Activated CD8-positive, alpha-beta T cell treated with anti-CD3 and anti-CD28 coated beads, Interleukin-2, amount 10 ng/mL, durations not matched to agents 7 days and 5 days (primary cell): ENCODE measurements at regions of chr6 and their contacts with region 1.

Region 1: DNA sequence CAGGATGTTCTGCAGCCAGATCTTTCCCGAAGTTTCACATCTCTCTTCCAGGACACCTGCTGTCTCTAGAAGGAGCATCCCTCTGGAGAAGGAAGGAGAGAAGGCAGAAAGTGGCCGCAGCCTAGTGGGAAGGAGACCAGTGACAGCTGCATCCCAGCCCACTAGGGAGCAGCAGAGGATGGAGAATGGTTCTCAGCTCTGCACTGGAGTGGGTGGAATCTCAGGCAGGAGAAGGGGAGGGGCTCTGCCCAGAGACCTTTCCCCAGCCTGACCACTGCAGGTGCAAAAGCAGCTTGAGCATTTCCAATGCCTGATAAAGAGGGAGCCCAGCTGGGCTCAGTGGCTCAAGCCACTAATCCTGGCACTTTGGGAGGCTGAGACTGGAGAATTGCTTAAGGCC is 32.3 kb downstream of the NCR2 start:
- DNase-seq: peak; percentile 22
- ATAC-seq: no peak
- H3K4me3 Mint-ChIP-seq: no peak overlapping the region
- H3K27ac Mint-ChIP-seq: no peak overlapping the region
- H3K4me1 Mint-ChIP-seq: peaks cover 26% of the 10 kb centered on the region
- H3K27me3 Mint-ChIP-seq: peaks cover 54% of the 10 kb centered on the region

Region 2: DNA sequence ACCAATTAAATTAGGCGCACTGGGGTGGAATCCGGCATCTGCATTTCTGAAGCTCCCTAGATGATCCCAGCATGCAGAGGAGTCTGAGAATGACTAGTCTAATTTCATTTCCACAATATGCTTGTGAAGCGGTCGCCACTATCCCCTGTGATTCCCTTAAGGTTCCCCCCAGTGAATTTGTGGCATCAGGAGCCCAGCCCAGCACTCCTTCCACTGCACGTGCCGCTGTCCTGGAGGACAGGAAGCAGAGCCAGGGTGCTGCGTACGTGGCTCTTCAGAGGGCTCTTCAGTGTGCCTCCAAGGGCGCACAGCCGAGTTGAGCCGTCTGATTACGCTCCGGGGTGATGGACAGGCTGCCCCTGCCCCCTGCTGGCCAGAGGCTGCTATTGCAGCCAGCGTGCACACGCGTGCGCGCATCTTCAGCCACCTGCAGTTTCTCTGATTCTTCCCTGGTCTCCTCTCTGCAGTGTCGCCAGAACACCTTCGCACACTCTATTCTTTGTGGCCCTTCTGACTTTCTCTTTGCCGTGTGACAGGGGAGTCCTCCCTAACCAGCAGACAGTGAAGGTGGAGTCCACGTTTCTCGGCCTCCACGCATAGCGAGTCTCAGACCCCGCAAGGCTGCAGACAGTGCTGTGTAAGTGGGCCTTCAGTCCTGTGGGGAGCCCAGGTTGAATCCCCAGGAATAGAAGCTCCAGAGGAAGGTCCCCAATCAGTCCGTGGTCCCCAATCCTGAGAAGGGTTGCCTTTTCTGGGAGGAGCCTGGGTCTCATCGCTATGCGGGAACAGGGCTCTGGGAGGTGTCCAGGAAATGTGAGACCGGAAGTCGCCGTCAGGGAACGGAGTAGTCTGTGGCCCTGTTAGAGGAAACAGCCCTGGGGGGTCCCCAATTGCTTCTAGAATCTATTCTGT is 48.8 kb before region 1 on chr6:
- CTCF ChIA-PET with region 1: interaction called, 58 read pairs
- POLR2A ChIA-PET with region 1: no interaction called
- DNase-seq: peak; percentile 90
- ATAC-seq: peak; percentile 98
- H3K4me3 Mint-ChIP-seq: peak overlapping the region; percentile 38
- H3K27ac Mint-ChIP-seq: peak overlapping the region; percentile 71
- H3K4me1 Mint-ChIP-seq: peaks cover 26% of the 10 kb centered on the region
- H3K27me3 Mint-ChIP-seq: peaks cover 27% of the 10 kb centered on the region

Region 3: DNA sequence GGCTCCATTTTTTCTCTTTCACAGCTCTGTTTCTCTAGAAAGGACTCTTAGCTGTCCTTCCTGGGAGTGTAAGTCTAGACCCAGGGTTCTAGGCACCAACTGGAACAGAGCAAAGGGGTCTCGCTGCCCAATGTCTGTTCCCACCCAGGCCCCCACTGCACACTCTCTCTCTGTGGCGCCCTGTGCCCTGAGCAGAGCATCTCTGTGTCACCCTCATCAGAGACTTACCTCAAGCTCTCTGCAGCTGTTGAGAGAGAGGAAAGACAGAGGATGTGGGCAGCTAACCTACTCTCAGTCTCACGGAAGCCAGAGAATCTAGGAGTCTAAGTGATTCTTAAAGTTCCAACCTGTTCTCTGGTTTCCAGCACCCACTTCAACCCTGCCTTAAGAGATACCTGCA is 22.8 kb before region 1 on chr6:
- CTCF ChIA-PET with region 1: interaction called, 64 read pairs
- POLR2A ChIA-PET with region 1: no interaction called
- DNase-seq: peak; percentile 79
- ATAC-seq: peak; percentile 99
- H3K4me3 Mint-ChIP-seq: peak overlapping the region; percentile 55
- H3K27ac Mint-ChIP-seq: peak overlapping the region; percentile 91
- H3K4me1 Mint-ChIP-seq: peaks cover 87% of the 10 kb centered on the region
- H3K27me3 Mint-ChIP-seq: no peaks in the 10 kb centered on the region

Region 4: GRCh38 chr6:41527721-41528590 is 160.3 kb after region 1 on chr6:
- CTCF ChIA-PET with region 1: no interaction called
- POLR2A ChIA-PET with region 1: no interaction called
- DNase-seq: no peak
- ATAC-seq: no peak
- H3K4me3 Mint-ChIP-seq: no peak overlapping the region
- H3K27ac Mint-ChIP-seq: no peak overlapping the region
- H3K4me1 Mint-ChIP-seq: peaks cover 20% of the 10 kb centered on the region
- H3K27me3 Mint-ChIP-seq: peaks cover 53% of the 10 kb centered on the region

Region 5: GRCh38 chr6:41591859-41592502 is 224.3 kb after region 1 on chr6:
- CTCF ChIA-PET with region 1: interaction called, 16 read pairs
- POLR2A ChIA-PET with region 1: no interaction called
- DNase-seq: peak; percentile 85
- ATAC-seq: peak; percentile 77
- H3K4me3 Mint-ChIP-seq: no peak overlapping the region
- H3K27ac Mint-ChIP-seq: no peak overlapping the region
- H3K4me1 Mint-ChIP-seq: no peaks in the 10 kb centered on the region
- H3K27me3 Mint-ChIP-seq: no peaks in the 10 kb centered on the region

Region 6: DNA sequence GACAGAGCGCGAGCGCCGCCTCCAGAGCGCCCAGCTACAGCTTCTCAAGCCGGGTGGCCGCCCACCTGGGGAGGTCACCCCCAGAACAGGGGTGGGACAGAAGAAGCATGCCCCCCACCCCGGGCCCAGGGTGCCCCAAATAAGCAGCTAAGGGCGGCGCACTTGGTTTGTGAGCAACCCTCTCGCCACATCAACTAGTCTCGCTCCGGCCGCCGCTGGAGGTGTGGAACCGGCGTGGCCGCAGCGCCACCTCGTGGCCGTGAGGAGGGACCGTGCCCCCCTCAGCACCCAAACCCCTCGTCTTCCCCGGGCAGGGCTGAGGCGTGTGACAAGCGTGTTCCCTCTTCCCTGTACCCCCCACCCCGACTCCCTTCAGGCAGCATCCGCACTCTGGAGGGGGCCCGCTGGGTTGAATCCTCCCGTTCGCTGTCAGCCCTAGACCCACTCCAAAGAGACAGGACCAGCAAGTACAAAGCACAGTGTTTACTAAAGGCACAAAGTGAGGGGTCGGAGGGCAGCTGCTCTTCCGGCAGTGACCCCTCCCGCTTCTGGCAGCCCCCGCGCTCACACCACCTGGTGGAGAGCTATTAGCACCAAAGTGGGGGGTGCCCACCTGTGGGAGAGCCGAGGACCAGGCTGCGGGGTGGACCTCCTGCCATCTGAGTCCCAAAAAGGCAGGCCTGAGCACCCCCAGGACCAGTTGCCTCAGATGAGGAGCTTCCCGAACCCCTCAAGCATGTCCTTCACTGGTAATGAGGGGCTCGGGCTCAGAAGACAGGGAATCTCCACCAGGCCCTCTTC is 316.0 kb after region 1 on chr6:
- CTCF ChIA-PET with region 1: interaction called, 17 read pairs
- POLR2A ChIA-PET with region 1: no interaction called
- DNase-seq: peak; percentile 84
- ATAC-seq: peak; percentile 94
- H3K4me3 Mint-ChIP-seq: peak overlapping the region; percentile 68
- H3K27ac Mint-ChIP-seq: peak overlapping the region; percentile 63
- H3K4me1 Mint-ChIP-seq: peaks cover 17% of the 10 kb centered on the region
- H3K27me3 Mint-ChIP-seq: peaks cover 2% of the 10 kb centered on the region

Region 7: GRCh38 chr6:41702771-41703494 is 335.2 kb after region 1 on chr6:
- CTCF ChIA-PET with region 1: no interaction called
- POLR2A ChIA-PET with region 1: no interaction called
- DNase-seq: no peak
- ATAC-seq: no peak
- H3K4me3 Mint-ChIP-seq: no peak overlapping the region
- H3K27ac Mint-ChIP-seq: no peak overlapping the region
- H3K4me1 Mint-ChIP-seq: peaks cover 30% of the 10 kb centered on the region
- H3K27me3 Mint-ChIP-seq: no peaks in the 10 kb centered on the region